ENCODE measurements at regions of chr19 and their contacts with region 1.

Region 1: DNA sequence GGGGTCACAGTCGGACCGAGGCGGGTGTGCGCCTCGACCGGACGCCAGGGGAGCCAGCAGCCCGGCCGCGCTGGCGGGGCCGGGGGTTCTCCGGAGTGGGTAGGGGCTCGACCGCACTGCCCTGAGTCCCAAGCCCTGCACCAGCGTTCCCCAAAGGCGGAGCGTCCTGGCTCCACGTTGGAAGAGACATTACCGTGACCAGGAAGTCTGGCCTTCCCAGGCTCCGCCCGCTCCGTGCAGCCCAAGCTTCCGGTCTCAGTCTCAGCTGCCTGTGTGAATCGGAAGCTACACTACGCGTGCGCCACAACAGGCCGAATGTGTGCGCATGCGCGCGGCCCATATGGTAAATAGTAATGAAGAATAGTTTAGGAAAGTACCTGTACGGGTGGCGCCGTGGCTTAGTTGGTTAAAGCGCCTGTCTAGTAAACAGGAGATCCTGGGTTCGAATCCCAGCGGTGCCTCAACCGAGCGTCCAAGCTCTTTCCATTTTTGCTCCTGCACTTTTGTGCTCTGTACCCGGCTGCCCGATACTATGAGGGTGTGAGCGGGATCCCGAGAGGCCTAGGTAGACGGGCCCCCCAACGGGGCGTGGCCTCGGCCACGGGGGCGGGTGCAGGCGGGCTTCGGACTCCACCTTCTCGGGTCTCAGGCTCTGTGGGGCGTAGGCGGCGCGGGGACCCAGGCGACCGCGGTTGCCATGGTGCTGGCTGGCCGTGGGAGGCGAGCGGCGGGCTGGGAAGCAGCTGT is 17.3 kb upstream of the LRP3 start:
- DNase-seq: peak; percentile 97
- ATAC-seq: peak; percentile 90
- H3K4me3 ChIP-seq: peak overlapping the region; percentile 80 to 97 (median 86)
- H3K27ac ChIP-seq: peak overlapping the region; percentile 92
- H3K4me1 ChIP-seq: peaks cover 59% of the 10 kb centered on the region
- H3K27me3 ChIP-seq: peaks cover 0 to 9% of the 10 kb centered on the region in 2 experiments; a peak in 1 of 5 replicates
- CTCF ChIP-seq: no peak
- EP300 ChIP-seq: 0 out of 4 replicates have a peak, but pooled peaks of 1 of the 2 experiments have one; percentile 13
- POLR2A ChIP-seq: peak; percentile 98 to 99
- RAD21 ChIP-seq: no peak; the same call in none of the 2 replicates

Region 2: DNA sequence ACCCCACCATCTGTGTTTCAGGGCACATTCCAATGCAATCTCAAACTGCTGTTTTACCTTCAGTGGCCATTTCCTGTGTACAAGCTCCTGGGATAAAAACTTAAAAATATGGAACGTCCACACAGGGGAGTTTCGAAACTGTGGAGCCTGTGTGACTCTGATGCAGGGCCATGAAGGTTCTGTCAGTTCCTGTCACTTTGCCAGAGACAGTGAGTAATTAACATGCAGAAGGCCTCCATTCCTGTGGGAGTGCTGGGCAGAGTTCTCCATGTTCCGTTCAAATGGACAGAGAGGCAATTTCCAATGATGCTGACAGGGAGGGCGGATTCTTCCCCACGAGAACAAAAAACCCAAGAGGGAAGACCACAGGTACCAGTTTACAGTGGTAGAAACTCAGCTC is 20.5 kb before region 1 on chr19:
- CTCF ChIA-PET with region 1: no interaction called
- POLR2A ChIA-PET with region 1: interaction called, 46 read pairs
- in situ Hi-C with region 1: no loop called
- intact Hi-C with region 1: no loop called
- DNase-seq: peak; percentile 35
- ATAC-seq: peak; percentile 52
- H3K4me3 ChIP-seq: no peak overlapping the region
- H3K27ac ChIP-seq: no peak overlapping the region
- H3K4me1 ChIP-seq: peaks cover 47% of the 10 kb centered on the region
- H3K27me3 ChIP-seq: no peaks in the 10 kb centered on the region
- CTCF ChIP-seq: no peak
- EP300 ChIP-seq: no peak
- POLR2A ChIP-seq: no peak
- RAD21 ChIP-seq: no peak

Region 3: GRCh38 chr19:33193865-33194362 is 17.1 kb after region 1 on chr19 and contains the start of gene LRP3:
- CTCF ChIA-PET with region 1: no interaction called
- POLR2A ChIA-PET with region 1: interaction called, 22 read pairs
- in situ Hi-C with region 1: no loop called
- intact Hi-C with region 1: no loop called
- DNase-seq: no peak
- ATAC-seq: peak; percentile 18; the same call in 2 of the 3 replicates
- H3K4me3 ChIP-seq: peak within 1 kb of the TSS; percentile 73 to 78 (median 76)
- H3K27ac ChIP-seq: peak within 1 kb of the TSS; percentile 85
- H3K4me1 ChIP-seq: peaks cover 42% of the 10 kb centered on the region
- H3K27me3 ChIP-seq: peaks cover 1 to 6% of the 10 kb centered on the region in 2 experiments; a peak in 2 of 5 replicates
- CTCF ChIP-seq: no peak
- EP300 ChIP-seq: no peak
- POLR2A ChIP-seq: peak in 1 of 2 experiments; percentile 38; a peak in 1 of 4 replicates
- RAD21 ChIP-seq: no peak
- total RNA-seq, gene LRP3: 45.1 and 51.6 TPM in 2 replicates

Region 4: GRCh38 chr19:33311326-33311682 is 134.5 kb after region 1 on chr19:
- CTCF ChIA-PET with region 1: no interaction called
- POLR2A ChIA-PET with region 1: no interaction called
- in situ Hi-C with region 1: no loop called
- intact Hi-C with region 1: no loop called
- DNase-seq: no peak
- ATAC-seq: peak; percentile 80
- H3K4me3 ChIP-seq: no peak overlapping the region
- H3K27ac ChIP-seq: no peak overlapping the region
- H3K4me1 ChIP-seq: peaks cover 27% of the 10 kb centered on the region
- H3K27me3 ChIP-seq: no peaks in the 10 kb centered on the region
- CTCF ChIP-seq: peak; percentile 78
- EP300 ChIP-seq: no peak
- POLR2A ChIP-seq: no peak
- RAD21 ChIP-seq: peak; percentile 71; the same call in 1 of the 2 replicates

Measured in HepG2 (cell line).